GM12878 (cell line): ENCODE measurements at regions of chrX and their contacts with region 1.

Region 1: DNA sequence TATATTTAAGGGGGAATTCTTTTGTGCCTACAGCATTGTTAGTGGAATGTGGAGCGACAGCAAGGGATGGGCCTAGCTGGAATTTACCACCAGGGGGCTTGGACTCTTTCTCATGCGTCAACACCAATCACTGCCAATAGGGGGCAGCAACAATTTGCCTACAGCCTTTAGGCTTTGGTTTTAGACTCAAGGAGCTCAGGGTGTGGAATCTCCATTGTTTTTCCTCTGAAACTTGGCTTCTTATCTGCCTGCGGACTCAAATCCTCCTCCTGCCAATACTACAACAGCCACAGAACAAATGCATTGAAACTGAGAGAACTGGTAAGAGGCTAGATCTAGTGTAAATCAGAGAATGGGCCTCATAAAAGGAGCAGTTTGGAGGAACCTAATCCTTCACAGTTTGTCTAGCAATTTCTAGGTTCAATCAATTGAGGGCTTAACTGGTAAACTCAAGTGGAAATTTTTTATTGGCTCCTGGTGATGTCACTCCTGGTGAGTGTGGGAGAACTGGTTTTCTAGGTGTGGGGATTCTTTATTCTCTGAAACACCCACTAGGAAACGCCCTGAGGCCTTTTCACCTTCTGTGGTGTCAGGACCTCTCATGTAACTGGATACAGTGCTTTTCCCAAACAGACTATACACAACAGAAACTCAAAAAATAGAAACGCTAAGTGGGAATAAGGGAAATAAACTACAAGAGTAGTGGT is 27.9 kb upstream of the TMSB4X start:
- DNase-seq: peak; percentile 85
- ATAC-seq: peak; percentile 9
- H3K4me3 ChIP-seq: no peak overlapping the region
- H3K27ac ChIP-seq: peak overlapping the region; percentile 97
- H3K4me1 ChIP-seq: peaks cover 41% of the 10 kb centered on the region
- H3K27me3 ChIP-seq: no peaks in the 10 kb centered on the region
- CTCF ChIP-seq: peak; percentile 97 to 100 (median 99); a peak in 5 of 6 replicates
- EP300 ChIP-seq: no peak
- POLR2A ChIP-seq: no peak
- RAD21 ChIP-seq: peak; percentile 98

Region 2: DNA sequence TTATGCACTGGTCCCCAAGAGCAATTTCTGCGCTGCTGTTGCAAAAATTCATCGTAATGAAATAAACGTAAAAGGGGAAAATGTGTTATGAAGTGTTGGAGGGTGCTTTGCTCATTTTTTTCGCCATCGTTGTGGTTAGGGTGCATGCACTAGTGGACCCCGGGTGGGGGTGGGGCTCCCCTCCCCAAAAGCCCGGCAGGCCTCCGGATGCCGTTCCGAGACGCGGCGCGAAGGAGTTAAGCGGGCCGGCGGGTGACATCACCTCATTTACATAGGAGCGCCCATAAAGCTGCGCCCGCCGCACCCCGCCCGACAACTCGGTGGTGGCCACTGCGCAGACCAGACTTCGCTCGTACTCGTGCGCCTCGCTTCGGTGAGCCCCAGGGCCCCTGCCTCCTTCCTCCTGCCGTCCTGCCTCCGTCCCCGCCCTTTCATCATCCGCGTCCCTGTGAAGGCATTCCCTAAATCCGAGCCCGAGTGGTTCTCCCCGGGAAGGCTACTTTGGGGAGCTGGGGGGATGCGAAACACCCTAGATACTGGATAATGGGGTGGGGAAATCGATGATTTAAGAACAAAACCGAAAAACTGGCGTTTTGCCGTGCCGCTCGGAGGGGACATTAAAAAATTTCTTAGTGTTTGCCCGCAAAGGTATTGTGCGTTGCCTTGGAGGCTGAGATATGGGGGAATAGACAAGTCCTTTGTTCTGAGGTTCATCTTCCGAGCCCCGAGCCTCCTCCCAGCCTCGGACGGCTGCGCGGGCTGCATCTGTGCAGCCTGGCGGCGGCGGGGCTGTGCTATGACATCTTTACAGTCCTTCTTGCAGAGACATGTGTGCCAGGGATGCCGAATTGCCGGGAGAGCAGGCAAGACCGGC is 28.0 kb after region 1 on chrX and contains the start of gene TMSB4X:
- CTCF ChIA-PET with region 1: interaction called, 32 read pairs
- POLR2A ChIA-PET with region 1: interaction called, 26 read pairs
- RAD21 ChIA-PET with region 1: interaction called, 186 read pairs
- SMC1A ChIA-PET with region 1: interaction called, 351 read pairs
- in situ Hi-C with region 1: no loop called
- intact Hi-C with region 1: loop called (anchors 1 kb)
- DNase-seq: no peak
- ATAC-seq: peak; percentile 35
- H3K4me3 ChIP-seq: peak within 1 kb of the TSS; percentile 81
- H3K27ac ChIP-seq: peak within 1 kb of the TSS; percentile 90
- H3K4me1 ChIP-seq: peaks cover 6% of the 10 kb centered on the region; the same call in 1 of the 2 replicates
- H3K27me3 ChIP-seq: no peaks in the 10 kb centered on the region
- CTCF ChIP-seq: no peak
- EP300 ChIP-seq: no peak
- POLR2A ChIP-seq: peak; percentile 97
- RAD21 ChIP-seq: no peak
- polyA plus RNA-seq, gene TMSB4X: 32,576 to 35,408 TPM

Region 3: DNA sequence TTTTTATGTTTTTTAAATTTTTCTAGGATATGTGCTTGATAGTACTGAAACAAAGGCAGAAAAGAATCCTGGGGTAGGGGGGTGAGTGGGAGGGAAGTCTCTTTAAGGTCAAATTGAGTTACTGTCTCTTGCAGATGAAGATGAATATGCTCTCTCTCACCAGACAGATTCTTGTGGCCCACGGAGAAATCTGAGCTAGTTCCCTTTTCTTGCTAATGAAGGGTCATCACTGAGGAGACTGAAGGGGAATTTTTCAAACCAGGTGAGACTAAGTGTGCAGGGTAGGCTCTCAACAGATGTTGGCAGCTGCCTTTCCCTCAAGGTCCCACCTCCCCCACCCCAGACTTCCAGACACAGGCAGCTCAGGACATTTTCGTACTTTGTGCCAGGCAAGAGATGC is 75.9 kb after region 1 on chrX:
- CTCF ChIA-PET with region 1: interaction called, 6 read pairs
- POLR2A ChIA-PET with region 1: interaction called, 4 read pairs
- RAD21 ChIA-PET with region 1: interaction called, 10 read pairs
- SMC1A ChIA-PET with region 1: interaction called, 10 read pairs
- in situ Hi-C with region 1: no loop called
- intact Hi-C with region 1: loop called (anchors 1 kb)
- DNase-seq: no peak
- ATAC-seq: peak; percentile 91
- H3K4me3 ChIP-seq: no peak overlapping the region
- H3K27ac ChIP-seq: peak overlapping the region; percentile 47
- H3K4me1 ChIP-seq: peaks cover 43% of the 10 kb centered on the region
- H3K27me3 ChIP-seq: no peaks in the 10 kb centered on the region
- CTCF ChIP-seq: no peak
- EP300 ChIP-seq: peak in 1 of 2 experiments; percentile 75; a peak in 2 of 4 replicates
- POLR2A ChIP-seq: no peak
- RAD21 ChIP-seq: no peak

Region 4: DNA sequence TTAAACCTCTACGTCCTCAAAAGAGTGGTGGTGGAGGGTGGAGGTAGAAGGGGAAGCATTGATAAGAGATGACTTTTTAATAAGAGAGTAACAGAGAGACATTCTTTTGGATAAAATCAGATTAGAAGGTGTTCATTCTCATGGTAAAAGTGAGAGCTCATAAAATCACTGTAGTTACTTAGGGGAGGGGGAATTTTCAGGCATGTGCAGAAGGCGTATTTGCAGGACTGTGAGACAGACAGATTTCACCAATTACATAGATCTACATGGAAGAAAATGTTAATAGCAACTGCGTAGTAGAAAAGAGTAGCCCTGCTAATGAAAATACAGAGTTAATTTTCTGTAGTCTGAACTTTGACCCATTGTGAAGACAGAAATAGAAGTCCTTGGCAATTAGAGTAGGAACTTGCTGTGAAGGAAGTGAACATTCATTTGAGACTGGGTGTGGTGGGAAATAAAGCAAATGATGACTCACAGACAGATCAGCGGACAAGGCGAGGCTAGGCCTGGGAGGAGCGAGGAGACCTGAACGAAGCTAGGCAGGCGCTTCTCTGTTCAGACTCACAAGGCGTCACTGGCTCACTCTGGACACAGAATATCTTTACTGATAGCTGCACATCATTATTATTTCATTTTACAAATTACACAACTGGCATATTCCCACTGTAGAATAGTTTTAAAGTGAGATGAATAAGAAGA is 154.6 kb after region 1 on chrX:
- CTCF ChIA-PET with region 1: interaction called, 10 read pairs
- POLR2A ChIA-PET with region 1: no interaction called
- RAD21 ChIA-PET with region 1: interaction called, 6 read pairs
- SMC1A ChIA-PET with region 1: interaction called, 632 read pairs
- in situ Hi-C with region 1: no loop called
- intact Hi-C with region 1: no loop called
- DNase-seq: no peak
- ATAC-seq: peak; percentile 57
- H3K4me3 ChIP-seq: no peak overlapping the region
- H3K27ac ChIP-seq: no peak overlapping the region
- H3K4me1 ChIP-seq: no peaks in the 10 kb centered on the region
- H3K27me3 ChIP-seq: no peaks in the 10 kb centered on the region
- CTCF ChIP-seq: no peak
- EP300 ChIP-seq: no peak
- POLR2A ChIP-seq: no peak
- RAD21 ChIP-seq: no peak

Region 5: DNA sequence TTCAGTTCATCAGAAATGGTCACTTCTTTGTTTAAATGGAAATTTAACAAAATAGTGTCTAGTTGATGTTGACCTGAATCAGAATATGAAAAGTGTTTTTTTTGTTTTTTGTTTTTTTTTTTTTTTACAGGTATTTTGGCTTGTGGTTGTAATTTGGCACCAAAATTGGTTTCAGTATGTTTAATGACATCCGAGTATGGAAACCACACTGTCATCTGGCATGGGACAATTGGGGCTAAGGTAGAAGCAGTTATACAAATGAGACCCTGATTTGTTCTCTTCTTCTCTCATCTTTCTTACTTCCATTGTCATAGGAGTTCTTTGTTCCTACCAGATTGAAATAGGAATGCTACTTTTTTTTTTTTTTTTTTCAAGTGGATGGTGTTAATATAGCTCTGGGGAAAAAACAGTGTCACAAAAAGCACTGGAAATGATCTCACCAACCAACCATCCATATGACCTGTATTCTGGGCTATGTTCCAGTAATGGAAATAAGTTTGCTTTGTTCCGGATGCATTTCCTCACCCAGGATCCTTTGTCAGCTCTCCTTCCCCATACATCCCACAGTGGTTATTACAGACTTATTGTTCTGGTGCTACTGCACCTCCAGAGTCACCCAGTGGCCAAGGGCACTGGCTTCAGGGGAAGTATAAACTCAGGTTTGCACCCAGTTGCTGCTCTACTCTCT is 277.0 kb after region 1 on chrX:
- CTCF ChIA-PET with region 1: no interaction called
- POLR2A ChIA-PET with region 1: no interaction called
- RAD21 ChIA-PET with region 1: no interaction called
- SMC1A ChIA-PET with region 1: no interaction called
- in situ Hi-C with region 1: no loop called
- intact Hi-C with region 1: no loop called
- DNase-seq: no peak
- ATAC-seq: peak; percentile 42; the same call in 2 of the 3 replicates
- H3K4me3 ChIP-seq: no peak overlapping the region
- H3K27ac ChIP-seq: no peak overlapping the region
- H3K4me1 ChIP-seq: no peaks in the 10 kb centered on the region
- H3K27me3 ChIP-seq: no peaks in the 10 kb centered on the region
- CTCF ChIP-seq: no peak
- EP300 ChIP-seq: no peak
- POLR2A ChIP-seq: no peak
- RAD21 ChIP-seq: no peak

Region 6: DNA sequence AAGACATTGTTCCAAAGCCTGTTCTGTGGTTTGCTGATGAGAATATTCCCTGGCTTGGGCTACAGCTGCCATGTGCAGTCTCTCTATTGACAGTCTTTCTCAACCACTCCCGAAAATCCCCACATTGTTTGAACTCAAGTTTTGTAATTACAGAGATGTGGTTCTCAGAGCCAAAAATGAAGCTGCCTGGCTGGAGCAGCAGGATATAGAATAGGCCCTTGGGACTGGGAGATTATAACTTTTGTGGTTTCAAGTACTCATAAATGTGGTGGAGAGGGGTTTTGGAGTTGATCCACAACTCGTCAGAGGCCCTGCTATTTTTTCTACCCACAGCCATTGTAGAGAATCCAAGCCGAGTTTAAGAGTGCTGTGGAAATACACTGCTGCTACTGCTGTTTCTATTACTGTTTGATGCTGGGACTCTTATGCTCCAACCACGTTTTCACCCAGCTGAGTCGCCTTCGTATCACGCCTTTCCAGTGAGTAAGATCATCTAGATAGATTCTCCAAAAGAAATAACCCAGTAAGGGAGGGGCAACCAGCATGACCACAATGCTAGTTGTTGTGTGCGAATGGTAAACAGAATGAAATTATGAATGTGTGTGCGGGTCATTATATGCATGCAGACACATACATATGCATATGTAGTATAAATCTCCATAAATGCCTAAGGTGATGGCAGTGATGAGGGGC is 430.0 kb after region 1 on chrX:
- CTCF ChIA-PET with region 1: no interaction called
- POLR2A ChIA-PET with region 1: no interaction called
- RAD21 ChIA-PET with region 1: no interaction called
- SMC1A ChIA-PET with region 1: interaction called, 7 read pairs
- in situ Hi-C with region 1: no loop called
- intact Hi-C with region 1: loop called (anchors 10 kb)
- DNase-seq: no peak
- ATAC-seq: peak; percentile 63
- H3K4me3 ChIP-seq: no peak overlapping the region
- H3K27ac ChIP-seq: no peak overlapping the region
- H3K4me1 ChIP-seq: no peaks in the 10 kb centered on the region; the same call in 1 of the 2 replicates
- H3K27me3 ChIP-seq: no peaks in the 10 kb centered on the region
- CTCF ChIP-seq: no peak
- EP300 ChIP-seq: no peak
- POLR2A ChIP-seq: no peak
- RAD21 ChIP-seq: no peak

Region 7: GRCh38 chrX:13646154-13646549 is 699.2 kb after region 1 on chrX:
- CTCF ChIA-PET with region 1: interaction called, 6 read pairs
- POLR2A ChIA-PET with region 1: no interaction called
- RAD21 ChIA-PET with region 1: interaction called, 10 read pairs
- SMC1A ChIA-PET with region 1: interaction called, 3 read pairs
- in situ Hi-C with region 1: loop called (anchors 25 kb)
- intact Hi-C with region 1: no loop called
- DNase-seq: no peak
- ATAC-seq: peak; percentile 80
- H3K4me3 ChIP-seq: no peak overlapping the region
- H3K27ac ChIP-seq: no peak overlapping the region
- H3K4me1 ChIP-seq: no peaks in the 10 kb centered on the region
- H3K27me3 ChIP-seq: no peaks in the 10 kb centered on the region; a peak in 1 of 4 replicates
- CTCF ChIP-seq: peak; percentile 67 to 80 (median 76)
- EP300 ChIP-seq: no peak
- POLR2A ChIP-seq: no peak
- RAD21 ChIP-seq: peak; percentile 72